AG04450 (cell line): ENCODE measurements at regions of chr16 and their contacts with region 1.

Region 1: DNA sequence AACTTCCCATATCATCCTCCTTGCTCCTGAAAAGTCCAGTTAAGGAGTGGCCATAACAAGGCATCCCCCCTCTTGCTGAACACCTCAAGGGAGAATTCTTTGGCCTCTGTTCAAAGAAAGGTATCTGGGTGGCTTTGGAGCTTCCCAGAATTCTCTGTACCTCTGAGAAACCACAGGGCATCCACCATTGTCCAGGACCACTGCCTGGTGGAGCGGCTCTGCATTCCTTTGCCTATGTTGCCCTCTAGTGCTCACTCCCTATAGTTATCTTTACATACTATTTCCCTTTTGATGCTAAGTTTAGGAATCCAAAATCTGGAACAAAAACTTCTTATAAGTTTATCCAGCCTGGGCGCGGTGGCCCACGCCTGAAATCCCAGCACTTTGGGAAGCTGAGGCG is 30.3 kb downstream of the CHD9NB start:
- DNase-seq: peak; percentile 7
- H3K4me3 ChIP-seq: no peak overlapping the region
- H3K27ac ChIP-seq: no peak overlapping the region
- H3K27me3 ChIP-seq: no peaks in the 10 kb centered on the region
- CTCF ChIP-seq: peak; percentile 72

Region 2: GRCh38 chr16:52068447-52069074 is 953.8 kb before region 1 on chr16:
- CTCF ChIA-PET with region 1: interaction called, 18 read pairs
- POLR2A ChIA-PET with region 1: no interaction called
- DNase-seq: no peak
- H3K4me3 ChIP-seq: no peak overlapping the region
- H3K27ac ChIP-seq: no peak overlapping the region
- H3K27me3 ChIP-seq: no peaks in the 10 kb centered on the region
- CTCF ChIP-seq: no peak

Region 3: DNA sequence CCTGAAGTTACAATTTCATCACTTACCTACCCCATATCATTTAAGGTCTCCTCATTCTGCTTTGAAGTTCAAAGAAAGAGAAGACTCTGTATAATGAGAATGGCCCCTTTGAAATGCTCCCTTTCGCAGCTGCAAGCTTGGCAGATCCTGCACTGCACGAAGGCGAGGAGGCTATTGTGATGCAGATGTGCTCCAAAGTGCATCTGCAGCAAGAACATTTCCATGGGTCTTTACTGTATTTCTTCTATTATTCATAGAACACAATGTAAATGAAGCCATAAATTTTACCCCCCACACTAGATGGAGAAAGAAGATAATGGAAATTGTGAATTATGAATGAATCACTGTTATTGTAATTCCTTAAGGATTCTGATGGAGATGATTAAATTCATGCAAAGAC is 148.3 kb before region 1 on chr16:
- CTCF ChIA-PET with region 1: no interaction called
- POLR2A ChIA-PET with region 1: no interaction called
- DNase-seq: no peak
- H3K4me3 ChIP-seq: no peak overlapping the region
- H3K27ac ChIP-seq: no peak overlapping the region
- H3K27me3 ChIP-seq: no peaks in the 10 kb centered on the region
- CTCF ChIP-seq: no peak

Region 4: DNA sequence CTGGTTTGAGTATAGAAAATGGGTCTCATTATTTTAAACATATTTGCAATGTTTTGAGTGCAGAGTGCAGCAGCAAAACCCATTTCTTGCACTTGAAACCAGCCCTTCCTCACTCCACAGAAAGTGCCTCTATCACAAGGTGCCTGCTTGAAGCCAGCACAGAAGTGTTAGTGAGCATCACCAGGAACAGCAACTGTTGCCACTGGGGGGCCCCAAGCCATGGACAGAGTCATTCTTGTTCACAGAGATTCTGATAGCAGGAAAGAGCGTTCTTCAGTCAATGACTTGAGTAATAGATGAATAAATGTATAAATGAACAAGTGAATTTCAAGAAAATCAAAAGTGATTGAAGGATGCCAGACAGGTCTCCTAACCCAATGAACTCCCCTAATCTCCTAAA is 15.3 kb before region 1 on chr16:
- CTCF ChIA-PET with region 1: interaction called, 18 read pairs
- POLR2A ChIA-PET with region 1: no interaction called
- DNase-seq: no peak
- H3K4me3 ChIP-seq: no peak overlapping the region
- H3K27ac ChIP-seq: no peak overlapping the region
- H3K27me3 ChIP-seq: no peaks in the 10 kb centered on the region
- CTCF ChIP-seq: no peak

Region 5: DNA sequence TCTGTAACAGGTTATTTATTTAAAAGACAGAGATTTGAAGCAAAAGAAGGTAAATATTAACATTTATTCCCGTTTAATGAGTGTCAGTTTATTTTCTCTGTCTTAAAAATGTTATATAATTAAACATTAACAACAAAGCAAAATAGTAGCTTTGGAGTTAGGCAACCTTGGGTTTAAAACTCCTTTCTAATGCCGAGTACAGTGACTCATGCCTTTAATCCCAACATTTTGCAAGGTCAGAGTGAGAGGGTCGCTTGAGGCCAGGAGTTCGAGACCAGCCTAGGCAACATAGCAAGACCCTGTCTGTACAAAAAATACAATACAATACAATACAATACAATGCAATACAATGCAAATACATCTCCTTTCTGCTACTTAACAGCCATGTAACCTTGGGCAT is 161.1 kb after region 1 on chr16:
- CTCF ChIA-PET with region 1: no interaction called
- POLR2A ChIA-PET with region 1: no interaction called
- DNase-seq: no peak
- H3K4me3 ChIP-seq: no peak overlapping the region
- H3K27ac ChIP-seq: no peak overlapping the region
- H3K27me3 ChIP-seq: no peaks in the 10 kb centered on the region
- CTCF ChIP-seq: no peak

Region 6: GRCh38 chr16:53282975-53283946 is 260.9 kb after region 1 on chr16:
- CTCF ChIA-PET with region 1: interaction called, 12 read pairs
- POLR2A ChIA-PET with region 1: no interaction called
- DNase-seq: peak; percentile 4
- H3K4me3 ChIP-seq: no peak overlapping the region
- H3K27ac ChIP-seq: no peak overlapping the region
- H3K27me3 ChIP-seq: no peaks in the 10 kb centered on the region
- CTCF ChIP-seq: peak; percentile 59